ENCODE measurements at regions of chr1 and their contacts with region 1.

Region 1: DNA sequence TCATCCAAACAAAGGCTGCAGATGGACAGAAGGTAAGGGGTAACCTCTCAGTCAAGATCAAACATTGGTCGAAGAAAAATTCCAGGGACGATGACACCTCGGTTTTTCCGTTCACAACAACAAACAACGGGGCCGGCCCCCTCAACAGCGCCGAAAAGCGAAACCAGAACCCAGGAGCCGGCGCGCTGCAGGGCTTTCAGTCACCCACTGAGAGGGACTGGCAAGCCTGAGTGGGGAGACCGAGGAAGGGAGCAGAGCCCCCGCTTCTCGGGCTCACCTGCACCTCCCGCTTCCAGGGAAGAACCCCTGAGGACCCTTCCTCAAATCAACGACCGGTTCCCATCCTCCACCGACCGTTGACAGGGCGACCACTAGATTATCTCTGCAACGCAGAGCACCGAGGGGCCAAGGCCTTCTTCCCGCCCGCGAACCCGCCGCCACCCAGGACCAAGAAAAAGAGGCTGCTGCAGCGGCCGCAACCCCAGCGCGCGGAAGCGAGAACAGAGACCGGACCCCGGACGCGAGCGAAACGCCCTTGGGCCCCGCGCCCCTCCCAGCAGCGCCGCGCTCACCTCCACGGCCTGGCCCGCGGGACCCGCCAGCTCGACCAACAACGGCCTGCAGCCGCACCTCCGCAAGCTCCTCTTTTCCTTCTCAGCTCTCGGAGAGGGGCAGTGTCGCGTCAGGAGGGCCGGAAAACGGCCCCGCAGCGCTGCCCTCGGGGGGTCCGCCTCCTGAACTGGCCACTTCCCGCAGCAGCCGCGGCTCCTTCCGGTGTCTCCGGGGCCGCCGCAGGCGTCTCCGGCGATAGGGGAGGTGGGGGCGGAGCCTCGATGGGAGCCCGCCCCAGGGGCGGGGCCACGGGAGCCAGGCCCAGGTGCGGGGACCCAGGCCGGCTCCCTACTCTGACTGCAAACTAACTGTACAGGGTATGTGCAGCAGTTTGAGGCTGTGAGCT is at the start of gene USP33:
- DNase-seq: peak; percentile 92 to 96
- ATAC-seq: peak; percentile 96
- H3K4me3 ChIP-seq: peak within 1 kb of the TSS; percentile 46 to 96
- H3K27ac ChIP-seq: peak within 1 kb of the TSS; percentile 28 to 64
- H3K4me1 ChIP-seq: peaks cover 0 to 3% of the 10 kb centered on the region in 2 donors
- H3K27me3 ChIP-seq: no peaks in the 10 kb centered on the region
- total RNA-seq, gene USP33: 58.2 to 74.6 TPM

Region 2: GRCh38 chr1:77779529-77780281 is 20.4 kb after region 1 on chr1 and contains the start of gene MIGA1:
- intact Hi-C with region 1: loop called in 1 of 2 experiments (anchors 1 kb)
- DNase-seq: peak; percentile 91 to 92
- ATAC-seq: peak; percentile 95
- H3K4me3 ChIP-seq: peak within 1 kb of the TSS; percentile 54 to 90
- H3K27ac ChIP-seq: peak within 1 kb of the TSS in 1 of 2 donors; percentile 37
- H3K4me1 ChIP-seq: no peaks in the 10 kb centered on the region
- H3K27me3 ChIP-seq: no peaks in the 10 kb centered on the region
- total RNA-seq, gene MIGA1: 18.6 to 22.0 TPM

Region 3: GRCh38 chr1:77803371-77803770 is 44.0 kb after region 1 on chr1:
- intact Hi-C with region 1: no loop called
- DNase-seq: no peak
- ATAC-seq: no peak
- H3K4me3 ChIP-seq: no peak overlapping the region
- H3K27ac ChIP-seq: no peak overlapping the region
- H3K4me1 ChIP-seq: no peaks in the 10 kb centered on the region
- H3K27me3 ChIP-seq: no peaks in the 10 kb centered on the region

Region 4: DNA sequence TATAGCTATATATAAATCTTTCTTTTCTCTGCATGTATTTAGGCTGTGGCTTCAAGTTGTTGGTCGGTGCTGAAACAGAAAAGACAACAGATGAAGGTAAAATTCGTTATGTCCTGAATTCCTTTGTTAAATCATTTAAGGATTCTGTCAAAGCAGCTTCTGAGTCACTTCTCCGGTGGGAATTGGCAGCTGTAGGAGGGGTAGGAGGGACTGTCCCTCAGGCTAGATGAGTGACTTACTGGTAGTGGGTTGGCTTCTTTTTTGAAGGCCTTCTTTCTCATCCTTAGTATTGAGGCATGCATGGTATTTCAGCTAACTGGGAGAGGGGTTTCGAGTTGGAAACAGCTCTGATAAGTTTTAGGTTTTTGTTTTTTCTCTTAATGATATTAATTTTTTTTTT is 106.9 kb after region 1 on chr1:
- intact Hi-C with region 1: no loop called
- DNase-seq: no peak
- ATAC-seq: no peak
- H3K4me3 ChIP-seq: no peak overlapping the region
- H3K27ac ChIP-seq: no peak overlapping the region
- H3K4me1 ChIP-seq: no peaks in the 10 kb centered on the region
- H3K27me3 ChIP-seq: no peaks in the 10 kb centered on the region